ENCODE measurements at regions of chr6 and their contacts with region 1.

Region 1: GRCh38 chr6:36678518-36679027 is at the start of gene CDKN1A:
- DNase-seq: peak; percentile 94 to 96 (median 95)
- ATAC-seq: peak; percentile 58 to 87 (median 76)
- H3K4me3 ChIP-seq: peak within 1 kb of the TSS; percentile 59 to 89 (median 70)
- H3K27ac ChIP-seq: peak within 1 kb of the TSS; percentile 77 to 93 (median 93)
- H3K4me1 ChIP-seq: peaks cover 0 to 55% (median 21%) of the 10 kb centered on the region in 4 donors
- H3K27me3 ChIP-seq: no peaks in the 10 kb centered on the region
- CTCF ChIP-seq: peak in 2 of 4 donors; percentile 18 to 19
- POLR2A ChIP-seq: peak; percentile 100
- total RNA-seq, gene CDKN1A: 20.0 to 124 (median 58.6) TPM

Region 2: GRCh38 chr6:36235309-36235708 is 443.3 kb before region 1 on chr6:
- intact Hi-C with region 1: no loop called
- DNase-seq: no peak
- ATAC-seq: peak in 1 of 4 donors; percentile 36
- H3K4me3 ChIP-seq: no peak overlapping the region
- H3K27ac ChIP-seq: no peak overlapping the region
- H3K4me1 ChIP-seq: no peaks in the 10 kb centered on the region
- H3K27me3 ChIP-seq: no peaks in the 10 kb centered on the region
- CTCF ChIP-seq: no peak
- POLR2A ChIP-seq: no peak

Region 3: GRCh38 chr6:36615018-36615761 is 63.4 kb before region 1 on chr6:
- intact Hi-C with region 1: loop called in 1 of 2 experiments (anchors 5 kb)
- DNase-seq: peak; percentile 30 to 49 (median 39)
- ATAC-seq: peak; percentile 49 to 72 (median 56)
- H3K4me3 ChIP-seq: no peak overlapping the region
- H3K27ac ChIP-seq: no peak overlapping the region
- H3K4me1 ChIP-seq: peaks cover 0 to 22% (median 9%) of the 10 kb centered on the region in 4 donors
- H3K27me3 ChIP-seq: no peaks in the 10 kb centered on the region
- CTCF ChIP-seq: peak; percentile 59 to 71 (median 60)
- POLR2A ChIP-seq: no peak

Region 4: DNA sequence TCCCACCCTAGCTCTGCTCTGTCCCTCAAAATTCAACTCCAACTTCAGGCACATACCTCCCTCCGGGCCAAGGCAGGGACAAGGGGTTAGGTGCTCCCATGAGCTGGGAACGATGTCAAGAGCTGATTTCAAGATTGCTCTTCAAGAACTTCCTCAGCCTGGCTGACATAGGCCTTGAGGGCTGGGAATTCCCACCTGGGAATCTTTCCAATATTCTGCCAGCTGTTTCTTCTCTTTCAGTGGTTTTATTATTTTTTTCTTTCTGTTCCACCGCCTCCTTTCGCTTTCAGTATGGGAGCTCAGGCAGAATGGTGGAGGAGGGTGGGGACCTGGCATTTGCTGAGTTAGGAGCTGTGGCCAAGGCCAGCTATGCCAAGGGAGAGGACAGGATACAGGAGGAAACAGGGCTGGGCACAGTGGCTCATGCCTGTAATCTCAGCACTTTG is 50.7 kb before region 1 on chr6:
- intact Hi-C with region 1: loop called in 1 of 2 experiments (anchors 5 kb)
- DNase-seq: peak in 2 of 3 donors; percentile 57 to 63
- ATAC-seq: peak; percentile 18 to 38 (median 32)
- H3K4me3 ChIP-seq: no peak overlapping the region
- H3K27ac ChIP-seq: peak overlapping the region in 2 of 3 donors; percentile 18 to 51
- H3K4me1 ChIP-seq: peaks cover 0 to 31% (median 4%) of the 10 kb centered on the region in 4 donors
- H3K27me3 ChIP-seq: no peaks in the 10 kb centered on the region
- CTCF ChIP-seq: no peak
- POLR2A ChIP-seq: no peak

Measured in right lobe of liver (tissue), 6 donors.